Body of pancreas (tissue), 4 donors: ENCODE measurements at regions of chr15 and their contacts with region 1.

Region 1: GRCh38 chr15:89017370-89018066 is 70.7 kb upstream of the ABHD2 start:
- DNase-seq: peak; percentile 60 to 71 (median 68)
- ATAC-seq: peak; percentile 63
- H3K4me3 ChIP-seq: no peak overlapping the region
- H3K27ac ChIP-seq: peak overlapping the region in 1 of 4 donors; percentile 16
- H3K4me1 ChIP-seq: peaks cover 6% of the 10 kb centered on the region
- H3K27me3 ChIP-seq: no peaks in the 10 kb centered on the region
- CTCF ChIP-seq: peak; percentile 58 to 73 (median 64)
- POLR2A ChIP-seq: no peak

Region 2: DNA sequence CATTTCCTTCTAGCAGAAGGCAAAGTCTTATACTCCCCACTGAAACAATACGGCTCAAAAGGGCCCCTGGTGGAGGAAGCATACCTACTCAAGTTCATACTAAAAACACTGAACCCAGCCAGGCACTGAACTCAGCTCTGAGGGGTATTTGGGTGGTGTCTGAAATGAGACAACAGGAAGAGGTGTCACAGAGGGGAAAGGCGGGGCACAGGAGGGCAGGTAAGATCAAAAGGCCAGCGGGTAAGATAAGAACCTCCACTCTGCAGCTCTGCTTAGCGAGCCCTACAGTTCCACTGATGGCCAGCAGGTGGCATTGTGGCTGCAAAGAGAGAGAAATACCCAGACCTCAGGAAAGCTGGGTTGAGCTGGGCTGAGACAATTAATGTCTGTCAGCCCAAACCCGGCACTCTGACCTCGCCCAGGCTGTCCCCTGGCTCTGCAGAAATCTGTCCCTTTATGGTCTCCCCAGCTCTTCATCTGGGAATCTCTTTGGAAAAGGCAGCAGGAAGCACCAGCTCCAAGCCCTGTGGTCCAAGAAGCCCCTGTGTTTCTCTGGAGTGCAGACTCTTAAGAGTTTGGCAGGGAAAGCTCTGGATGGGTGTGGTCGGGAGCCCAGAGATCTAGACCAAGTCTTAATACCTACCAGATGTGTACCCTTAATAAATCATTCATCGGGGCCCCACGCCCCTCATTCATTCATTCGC is 112.7 kb before region 1 on chr15:
- intact Hi-C with region 1: loop called (anchors 10 kb)
- DNase-seq: peak; percentile 76 to 84 (median 80)
- ATAC-seq: peak; percentile 82
- H3K4me3 ChIP-seq: no peak overlapping the region
- H3K27ac ChIP-seq: no peak overlapping the region
- H3K4me1 ChIP-seq: peaks cover 7% of the 10 kb centered on the region
- H3K27me3 ChIP-seq: no peaks in the 10 kb centered on the region
- CTCF ChIP-seq: peak; percentile 87 to 99 (median 93)
- POLR2A ChIP-seq: no peak